Psoas muscle (tissue), 8 donors: ENCODE measurements at regions of chr2 and their contacts with region 1.

Region 1: GRCh38 chr2:25606892-25607291 is 66.5 kb downstream of the DTNB start:
- DNase-seq: no peak
- ATAC-seq: peak in 1 of 4 donors; percentile 59
- H3K4me3 ChIP-seq: no peak overlapping the region
- H3K27ac ChIP-seq: no peak overlapping the region
- H3K4me1 ChIP-seq: no peaks in the 10 kb centered on the region
- H3K27me3 ChIP-seq: no peaks in the 10 kb centered on the region
- CTCF ChIP-seq: peak; percentile 65

Region 2: GRCh38 chr2:25664183-25664964 is 57.5 kb after region 1 on chr2:
- intact Hi-C with region 1: loop called in 1 of 2 experiments (anchors 2 kb)
- DNase-seq: peak in 1 of 2 donors; percentile 23
- ATAC-seq: peak in 3 of 4 donors; percentile 61 to 84 (median 71)
- H3K4me3 ChIP-seq: no peak overlapping the region
- H3K27ac ChIP-seq: no peak overlapping the region
- H3K4me1 ChIP-seq: no peaks in the 10 kb centered on the region
- H3K27me3 ChIP-seq: no peaks in the 10 kb centered on the region
- CTCF ChIP-seq: peak; percentile 52

Region 3: GRCh38 chr2:25690058-25690457 is 83.2 kb after region 1 on chr2:
- intact Hi-C with region 1: loop called in 1 of 2 experiments (anchors 10 kb)
- DNase-seq: no peak
- ATAC-seq: no peak
- H3K4me3 ChIP-seq: no peak overlapping the region
- H3K27ac ChIP-seq: no peak overlapping the region
- H3K4me1 ChIP-seq: no peaks in the 10 kb centered on the region
- H3K27me3 ChIP-seq: no peaks in the 10 kb centered on the region
- CTCF ChIP-seq: no peak

Region 4: GRCh38 chr2:25700221-25700660 is 93.3 kb after region 1 on chr2:
- intact Hi-C with region 1: loop called (anchors 5 to 10 kb)
- DNase-seq: no peak
- ATAC-seq: peak in 2 of 4 donors; percentile 21 to 54
- H3K4me3 ChIP-seq: no peak overlapping the region
- H3K27ac ChIP-seq: no peak overlapping the region
- H3K4me1 ChIP-seq: no peaks in the 10 kb centered on the region
- H3K27me3 ChIP-seq: peaks cover 0 to 13% (median 0%) of the 10 kb centered on the region in 3 donors
- CTCF ChIP-seq: peak; percentile 59

Region 5: DNA sequence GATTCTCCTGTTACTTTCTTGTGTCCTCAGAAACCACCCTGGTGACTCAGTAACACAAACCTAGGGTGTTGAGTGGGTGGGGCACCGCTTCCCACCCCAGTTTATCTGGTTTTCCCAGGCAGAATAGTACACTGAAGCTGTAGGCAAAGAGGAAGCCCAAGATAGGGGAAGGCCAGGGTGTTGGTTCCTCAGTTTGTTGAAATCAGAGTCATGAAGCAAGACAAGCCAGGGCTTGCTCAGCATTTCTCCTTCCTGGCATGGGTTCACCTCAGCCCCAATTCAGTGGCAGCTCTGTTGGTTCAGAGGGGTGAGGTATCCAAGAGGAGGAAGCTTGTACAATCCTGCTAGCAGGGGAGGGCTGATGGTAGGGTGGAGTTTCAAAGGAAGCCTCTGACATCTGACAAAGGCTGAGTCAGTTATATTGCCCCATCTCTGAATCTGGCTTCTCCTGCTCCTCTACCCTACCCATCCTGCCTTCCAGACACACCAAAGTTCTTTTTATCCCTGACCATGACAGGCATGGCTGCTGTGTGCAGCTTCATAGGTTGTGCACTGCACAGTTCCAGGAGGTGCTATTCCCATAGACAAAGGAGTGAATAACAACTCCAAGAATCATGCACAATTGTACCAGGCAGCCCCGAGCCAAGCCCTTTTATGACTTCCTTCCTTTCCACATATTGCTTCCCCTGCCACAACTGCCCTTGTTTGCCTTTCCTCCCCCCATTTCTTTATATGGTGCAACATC is 402.1 kb after region 1 on chr2:
- intact Hi-C with region 1: no loop called
- DNase-seq: peak; percentile 45 to 56
- ATAC-seq: peak; percentile 73 to 83 (median 76)
- H3K4me3 ChIP-seq: no peak overlapping the region
- H3K27ac ChIP-seq: peak overlapping the region; percentile 67
- H3K4me1 ChIP-seq: peaks cover 24% of the 10 kb centered on the region
- H3K27me3 ChIP-seq: no peaks in the 10 kb centered on the region
- CTCF ChIP-seq: no peak